ENCODE measurements at regions of chr3 and their contacts with region 1.

Region 1: GRCh38 chr3:122458992-122459391 is 43.1 kb upstream of the WDR5B start:
- DNase-seq: peak; percentile 29
- H3K4me3 ChIP-seq: no peak overlapping the region
- H3K27ac ChIP-seq: no peak overlapping the region
- H3K4me1 ChIP-seq: no peaks in the 10 kb centered on the region
- H3K27me3 ChIP-seq: no peaks in the 10 kb centered on the region
- CTCF ChIP-seq: peak; percentile 36 to 42

Region 2: GRCh38 chr3:122514123-122515019 is 55.4 kb after region 1 on chr3 and contains the start of gene KPNA1:
- CTCF ChIA-PET with region 1: no interaction called
- dilution Hi-C with region 1: no loop called
- in situ Hi-C with region 1: no loop called
- intact Hi-C with region 1: loop called (anchors 1 kb)
- DNase-seq: peak; percentile 88
- H3K4me3 ChIP-seq: peak within 1 kb of the TSS; percentile 81 to 87 (median 82)
- H3K27ac ChIP-seq: peak within 1 kb of the TSS; percentile 75
- H3K4me1 ChIP-seq: peaks cover 10% of the 10 kb centered on the region
- H3K27me3 ChIP-seq: no peaks in the 10 kb centered on the region
- CTCF ChIP-seq: no peak
- total RNA-seq, gene KPNA1: 70.0 to 95.3 TPM

Region 3: DNA sequence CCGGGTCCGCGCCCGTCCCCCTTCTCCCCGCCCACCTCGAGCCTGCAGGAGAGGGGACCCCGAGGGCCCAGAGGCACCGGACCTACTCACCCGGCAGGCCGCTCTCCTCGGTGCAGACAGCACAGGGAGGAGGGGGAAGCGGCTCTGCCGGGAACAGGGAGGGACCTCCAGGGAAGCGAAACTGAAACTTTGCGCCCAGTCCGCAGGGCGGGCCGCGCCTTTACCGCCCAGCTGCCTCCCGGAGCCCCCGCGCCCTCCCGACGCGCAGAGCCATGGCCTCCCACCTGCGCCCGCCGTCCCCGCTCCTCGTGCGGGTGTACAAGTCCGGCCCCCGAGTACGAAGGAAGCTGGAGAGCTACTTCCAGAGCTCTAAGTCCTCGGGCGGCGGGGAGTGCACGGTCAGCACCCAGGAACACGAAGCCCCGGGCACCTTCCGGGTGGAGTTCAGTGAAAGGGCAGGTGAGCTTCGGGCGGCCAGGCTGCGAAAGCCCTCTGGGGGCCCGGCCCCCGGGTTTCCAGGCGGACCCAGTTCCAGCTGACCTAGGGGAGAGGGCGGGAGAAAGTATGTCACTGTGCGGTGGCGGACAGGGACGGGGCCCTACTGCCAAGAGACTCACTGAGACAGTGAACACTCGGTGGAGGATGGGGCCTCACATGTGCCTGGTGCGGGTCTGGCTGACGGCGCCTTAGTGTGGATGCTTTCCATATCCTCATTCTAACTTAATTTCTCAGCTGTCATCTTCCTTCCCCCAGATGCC is 105.3 kb after region 1 on chr3 and contains the starts of genes DTX3L and PARP9:
- CTCF ChIA-PET with region 1: no interaction called
- dilution Hi-C with region 1: no loop called
- in situ Hi-C with region 1: no loop called
- intact Hi-C with region 1: loop called (anchors 1 kb)
- DNase-seq: peak; percentile 77
- H3K4me3 ChIP-seq: peak within 1 kb of the TSS; percentile 87 to 93 (median 91)
- H3K27ac ChIP-seq: peak within 1 kb of the TSS; percentile 76
- H3K4me1 ChIP-seq: peaks cover 12% of the 10 kb centered on the region
- H3K27me3 ChIP-seq: no peaks in the 10 kb centered on the region
- CTCF ChIP-seq: no peak
- total RNA-seq, gene DTX3L: 10.7 to 15.6 TPM
- total RNA-seq, gene PARP9: 6.4 to 10.0 TPM

Region 4: DNA sequence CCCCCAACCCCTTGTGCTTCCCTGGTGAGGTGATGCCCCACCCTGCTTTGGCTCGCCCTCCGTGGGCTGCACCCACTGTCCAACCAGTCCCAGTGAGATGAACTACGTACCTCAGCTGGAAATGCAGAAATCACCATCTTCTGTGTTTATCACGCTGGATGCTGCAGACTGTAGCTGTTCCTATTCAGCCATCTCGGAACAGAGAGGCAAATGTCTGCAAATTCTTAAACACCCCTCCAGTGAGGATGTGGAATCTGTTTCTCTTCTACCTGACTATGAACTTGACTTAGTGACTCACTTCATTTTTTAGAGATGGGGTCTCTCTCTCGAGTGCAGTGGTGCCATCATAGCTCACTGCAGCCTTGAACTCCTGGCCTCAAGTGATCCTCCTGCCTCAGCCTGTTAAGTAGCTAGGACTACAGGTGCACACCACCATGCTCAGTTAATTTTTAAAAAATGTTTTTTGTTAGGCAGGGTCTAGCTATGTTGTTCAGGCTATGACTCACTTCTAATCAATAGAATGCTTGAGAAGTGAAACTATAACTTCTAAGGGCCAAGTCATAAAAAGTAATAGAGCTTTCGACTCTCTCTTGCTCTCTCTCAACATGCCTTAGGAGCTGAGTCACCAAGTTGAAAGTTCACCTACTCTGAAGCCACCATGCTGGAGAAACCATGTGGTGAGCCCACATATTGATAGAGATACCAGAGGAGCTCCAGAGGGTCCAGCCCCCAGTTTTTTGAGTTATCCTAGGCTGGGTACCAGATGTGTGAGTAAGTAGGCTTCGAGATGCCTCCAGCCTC is 210.1 kb after region 1 on chr3:
- CTCF ChIA-PET with region 1: no interaction called
- dilution Hi-C with region 1: loop called (anchors 10 kb)
- in situ Hi-C with region 1: no loop called
- intact Hi-C with region 1: no loop called
- DNase-seq: peak; percentile 45
- H3K4me3 ChIP-seq: no peak overlapping the region
- H3K27ac ChIP-seq: no peak overlapping the region
- H3K4me1 ChIP-seq: peaks cover under 1% of the 10 kb centered on the region
- H3K27me3 ChIP-seq: no peaks in the 10 kb centered on the region
- CTCF ChIP-seq: no peak